AG04449 (cell line): ENCODE measurements at regions of chr9 and their contacts with region 1.

Region 1: GRCh38 chr9:98502360-98503325 is 206.1 kb downstream of the GABBR2 start:
- DNase-seq: peak; percentile 33
- H3K4me3 ChIP-seq: no peak overlapping the region
- CTCF ChIP-seq: no peak

Region 2: DNA sequence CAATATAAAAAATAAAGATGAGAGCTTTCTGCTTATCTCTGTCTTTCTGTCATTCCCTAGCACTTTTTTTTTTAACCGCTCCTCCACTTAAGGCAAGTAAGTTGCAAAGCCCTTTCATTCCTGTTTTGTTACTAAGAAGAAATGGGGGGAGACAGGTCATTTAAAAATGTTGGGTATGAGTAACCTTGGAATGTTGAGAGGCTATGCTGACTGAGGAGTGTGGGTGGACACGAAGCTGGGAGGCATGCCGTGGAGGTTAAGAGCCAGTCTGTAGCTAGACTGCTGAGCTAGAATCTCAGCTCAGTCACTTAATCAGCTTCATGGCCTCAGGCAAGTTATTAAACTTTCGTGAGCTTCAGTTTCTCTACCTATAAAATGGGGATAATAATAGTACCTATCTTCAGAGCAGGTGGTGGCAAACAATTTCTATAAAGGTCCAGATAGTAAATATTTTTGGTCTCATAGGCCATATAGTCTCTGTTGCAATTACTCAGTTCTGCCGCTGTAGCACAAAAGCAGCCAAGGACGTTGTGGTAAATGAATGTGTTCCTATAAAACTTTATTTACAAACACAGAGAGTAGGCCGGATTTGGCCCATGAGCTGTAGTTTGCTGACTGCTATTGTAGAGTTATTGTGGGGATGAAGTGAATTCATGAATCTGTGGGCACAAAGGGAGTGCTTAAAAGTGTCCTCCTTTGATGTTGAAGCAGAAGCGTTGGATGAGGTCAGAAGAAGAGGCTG is 13.9 kb before region 1 on chr9:
- CTCF ChIA-PET with region 1: interaction called, 5 read pairs
- POLR2A ChIA-PET with region 1: interaction called, 10 read pairs
- DNase-seq: peak; percentile 93
- H3K4me3 ChIP-seq: no peak overlapping the region
- CTCF ChIP-seq: no peak

Region 3: DNA sequence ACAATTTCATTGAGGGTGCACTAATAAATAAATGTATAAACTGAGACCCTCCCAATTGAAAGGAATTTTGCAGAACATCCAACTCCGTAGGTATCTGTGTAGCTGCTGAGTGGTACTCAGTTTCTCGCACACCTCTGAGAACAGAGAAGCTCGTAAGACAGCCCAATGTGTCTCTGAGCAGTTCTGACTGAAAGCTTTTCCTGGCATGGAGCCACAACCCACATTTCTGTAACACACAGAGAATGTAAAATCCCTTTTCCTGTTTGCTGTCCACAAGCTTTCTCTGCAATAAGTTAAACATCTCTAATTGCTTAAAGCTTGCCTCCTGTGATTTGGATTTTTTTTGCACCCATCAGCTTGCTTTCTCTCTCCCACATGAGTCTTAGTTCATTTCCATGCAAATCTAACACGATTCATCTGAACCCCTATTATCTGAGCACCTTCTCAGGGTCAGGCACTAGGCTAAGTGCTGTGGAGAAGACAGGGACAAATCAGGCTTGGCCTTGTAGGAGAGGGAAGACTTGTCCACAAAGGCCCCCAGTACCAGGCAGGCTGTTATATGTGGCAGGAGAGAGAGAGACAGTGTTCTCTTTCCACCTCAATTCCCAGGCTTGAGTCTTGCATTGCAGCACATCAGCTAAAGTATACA is 396.9 kb after region 1 on chr9:
- CTCF ChIA-PET with region 1: no interaction called
- POLR2A ChIA-PET with region 1: no interaction called
- DNase-seq: peak; percentile 59
- H3K4me3 ChIP-seq: no peak overlapping the region
- CTCF ChIP-seq: no peak